Common myeloid progenitor, CD34-positive (primary cell): ENCODE measurements at regions of chr1 and their contacts with region 1.

Region 1: GRCh38 chr1:209248649-209249279 is 334.8 kb upstream of the CAMK1G start:
- DNase-seq: peak; percentile 54 to 77 (median 72)
- H3K4me3 ChIP-seq: peak overlapping the region in 1 of 7 experiments; percentile 32
- H3K27ac ChIP-seq: no peak overlapping the region
- H3K4me1 ChIP-seq: peaks cover 0 to 8% (median 4%) of the 10 kb centered on the region in 4 experiments
- H3K27me3 ChIP-seq: no peaks in the 10 kb centered on the region

Region 2: GRCh38 chr1:208885060-208885459 is 363.7 kb before region 1 on chr1:
- CTCF ChIA-PET with region 1: no interaction called
- POLR2A ChIA-PET with region 1: no interaction called
- DNase-seq: no peak
- H3K4me3 ChIP-seq: no peak overlapping the region
- H3K27ac ChIP-seq: no peak overlapping the region
- H3K4me1 ChIP-seq: no peaks in the 10 kb centered on the region
- H3K27me3 ChIP-seq: no peaks in the 10 kb centered on the region

Region 3: GRCh38 chr1:209238356-209238755 is 10.4 kb before region 1 on chr1:
- CTCF ChIA-PET with region 1: interaction called, 12 read pairs
- POLR2A ChIA-PET with region 1: no interaction called
- DNase-seq: no peak
- H3K4me3 ChIP-seq: no peak overlapping the region
- H3K27ac ChIP-seq: no peak overlapping the region
- H3K4me1 ChIP-seq: no peaks in the 10 kb centered on the region
- H3K27me3 ChIP-seq: peaks cover 0 to 8% (median 2%) of the 10 kb centered on the region in 5 experiments

Region 4: DNA sequence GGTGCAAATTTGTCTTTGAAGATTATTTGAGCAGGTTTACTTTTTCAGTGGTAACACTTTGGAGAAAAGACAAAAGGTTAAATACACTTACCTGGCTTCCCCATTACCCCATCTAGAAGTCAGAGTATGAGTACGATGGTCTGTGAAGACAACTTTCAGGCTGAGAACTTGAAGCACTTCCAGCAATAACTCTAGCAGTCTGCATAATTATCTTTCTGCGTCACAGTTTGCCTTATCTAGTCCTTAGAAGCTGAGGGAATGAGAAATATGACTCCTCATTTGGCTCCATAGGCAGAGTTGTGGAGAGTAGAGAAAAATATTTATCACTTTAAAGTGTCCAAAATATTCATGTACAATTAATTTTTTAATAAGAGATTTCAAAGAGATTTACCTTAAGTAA is 11.4 kb after region 1 on chr1:
- CTCF ChIA-PET with region 1: interaction called, 14 read pairs
- POLR2A ChIA-PET with region 1: no interaction called
- DNase-seq: no peak
- H3K4me3 ChIP-seq: no peak overlapping the region
- H3K27ac ChIP-seq: no peak overlapping the region
- H3K4me1 ChIP-seq: no peaks in the 10 kb centered on the region
- H3K27me3 ChIP-seq: no peaks in the 10 kb centered on the region

Region 5: DNA sequence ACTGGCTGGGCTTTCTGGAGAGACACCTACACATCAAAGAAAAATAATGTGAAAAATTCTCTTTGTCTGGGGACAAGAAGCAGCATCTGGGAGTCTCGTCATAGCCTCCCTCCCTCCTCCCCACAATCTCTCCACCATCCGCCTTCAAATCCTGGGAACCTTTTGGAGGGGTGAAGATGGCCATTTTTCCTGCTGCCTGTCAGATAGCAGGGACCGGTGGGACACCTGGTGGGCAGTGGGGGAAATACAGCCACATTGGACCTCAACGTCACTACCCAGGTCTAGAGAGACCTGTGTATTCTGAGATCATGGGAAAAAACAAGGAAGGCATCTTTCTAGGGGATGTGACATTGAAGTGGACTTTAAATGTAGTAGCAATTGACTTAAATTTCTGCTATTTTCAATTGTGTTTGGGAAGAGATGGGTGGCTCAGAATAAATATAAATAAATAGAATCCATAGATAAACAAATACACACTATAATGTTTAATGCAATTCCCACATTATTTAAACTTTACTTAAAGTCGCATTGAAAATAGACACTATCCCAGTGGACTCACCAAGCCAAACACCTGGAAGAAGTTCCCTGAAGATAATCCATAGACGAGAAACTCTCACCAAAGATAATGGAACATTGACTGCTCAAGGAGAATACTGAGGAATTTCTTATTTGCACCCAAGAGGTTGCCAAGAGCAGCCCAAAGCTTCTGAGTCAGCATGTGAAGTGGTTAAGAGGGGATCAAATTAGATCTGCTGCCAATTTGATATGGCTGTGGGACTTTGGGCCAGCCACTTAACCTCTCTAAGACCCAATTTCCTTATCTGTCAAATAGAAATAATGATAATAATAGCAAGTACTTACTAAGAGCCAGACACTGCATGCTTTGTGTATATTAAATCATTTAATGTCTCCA is 187.1 kb after region 1 on chr1:
- CTCF ChIA-PET with region 1: interaction called, 19 read pairs
- POLR2A ChIA-PET with region 1: no interaction called
- DNase-seq: peak; percentile 49 to 75 (median 63)
- H3K4me3 ChIP-seq: no peak overlapping the region
- H3K27ac ChIP-seq: no peak overlapping the region
- H3K4me1 ChIP-seq: peaks cover 0 to 8% (median 0%) of the 10 kb centered on the region in 4 experiments
- H3K27me3 ChIP-seq: no peaks in the 10 kb centered on the region